ENCODE measurements at regions of chr10 and their contacts with region 1.

Region 1: DNA sequence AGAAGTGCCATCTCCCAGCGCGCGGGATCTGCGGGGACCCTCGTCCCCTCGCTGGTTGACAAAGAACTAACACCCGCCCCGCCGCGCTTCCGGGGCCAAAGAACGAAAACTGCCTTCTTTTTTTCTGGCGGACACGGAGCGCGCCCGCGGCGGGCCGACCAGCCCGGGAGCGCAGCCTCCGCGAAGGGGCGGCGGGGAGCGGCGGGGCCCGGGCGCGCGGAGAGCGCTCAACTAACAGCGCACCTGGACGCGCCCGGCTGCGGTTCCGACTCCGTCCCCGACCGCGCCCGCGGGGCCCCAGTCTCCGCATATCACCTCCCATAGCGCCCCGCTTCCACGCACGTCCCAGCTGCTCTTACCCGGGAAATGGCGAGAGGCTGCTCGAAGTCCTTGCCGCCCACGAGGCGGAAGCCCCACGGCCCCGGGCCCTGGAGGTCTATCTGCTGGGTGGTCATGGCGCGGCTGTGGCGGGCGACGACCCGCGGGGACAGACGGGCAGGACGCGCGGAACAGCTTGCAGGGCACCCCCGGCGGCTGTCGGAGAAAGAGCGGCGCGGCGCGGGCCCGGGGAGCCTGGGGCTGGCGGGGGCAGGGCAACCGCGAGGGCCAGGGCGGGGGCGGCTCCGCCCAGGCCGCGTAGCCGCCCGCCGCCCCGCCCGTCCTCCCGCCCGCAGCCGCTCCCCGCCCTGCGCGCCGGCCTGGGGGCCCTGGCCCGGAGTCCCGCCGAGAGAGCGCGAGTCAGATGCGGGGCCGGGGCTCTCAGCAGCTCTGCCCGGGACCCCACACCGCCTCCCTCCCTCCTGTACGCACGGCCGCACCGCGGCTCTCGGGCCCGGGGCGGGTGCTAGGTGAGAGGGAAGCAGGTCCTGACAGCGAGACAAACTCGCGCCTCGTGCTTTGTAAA is at the start of gene PDLIM1:
- DNase-seq: peak in 4 of 9 donors; percentile 16 to 57 (median 23)
- ATAC-seq: peak; percentile 82
- H3K4me3 ChIP-seq: peak within 1 kb of the TSS; percentile 43
- H3K4me3 Mint-ChIP-seq: peak within 1 kb of the TSS; percentile 71 to 88 (median 78)
- H3K27ac ChIP-seq: no peak within 1 kb of the TSS
- H3K27ac Mint-ChIP-seq: peak within 1 kb of the TSS in 2 of 9 donors; percentile 64 to 82
- H3K4me1 ChIP-seq: peaks cover 6 to 8% of the 10 kb centered on the region in 2 donors
- H3K4me1 Mint-ChIP-seq: peaks cover 11 to 51% (median 23%) of the 10 kb centered on the region in 7 donors
- H3K27me3 ChIP-seq: peaks cover 0 to 9% of the 10 kb centered on the region in 2 donors
- H3K27me3 Mint-ChIP-seq: peaks cover 39 to 59% (median 52%) of the 10 kb centered on the region in 5 donors
- total RNA-seq, gene PDLIM1: 0.32 to 27.6 (median 0.61) TPM

Region 2: GRCh38 chr10:95196053-95196452 is 94.7 kb before region 1 on chr10:
- CTCF ChIA-PET with region 1: no interaction called
- POLR2A ChIA-PET with region 1: no interaction called
- intact Hi-C with region 1: no loop called
- DNase-seq: no peak
- ATAC-seq: no peak
- H3K4me3 ChIP-seq: no peak overlapping the region
- H3K4me3 Mint-ChIP-seq: no peak overlapping the region
- H3K27ac ChIP-seq: no peak overlapping the region
- H3K27ac Mint-ChIP-seq: no peak overlapping the region
- H3K4me1 ChIP-seq: no peaks in the 10 kb centered on the region
- H3K4me1 Mint-ChIP-seq: no peaks in the 10 kb centered on the region
- H3K27me3 ChIP-seq: no peaks in the 10 kb centered on the region
- H3K27me3 Mint-ChIP-seq: peaks cover 0 to 12% (median 5%) of the 10 kb centered on the region in 5 donors

Region 3: GRCh38 chr10:95350219-95350829 is 59.6 kb after region 1 on chr10:
- CTCF ChIA-PET with region 1: no interaction called
- POLR2A ChIA-PET with region 1: no interaction called
- intact Hi-C with region 1: no loop called
- DNase-seq: no peak
- ATAC-seq: no peak
- H3K4me3 ChIP-seq: no peak overlapping the region
- H3K4me3 Mint-ChIP-seq: no peak overlapping the region
- H3K27ac ChIP-seq: no peak overlapping the region
- H3K27ac Mint-ChIP-seq: no peak overlapping the region
- H3K4me1 ChIP-seq: no peaks in the 10 kb centered on the region
- H3K4me1 Mint-ChIP-seq: no peaks in the 10 kb centered on the region
- H3K27me3 ChIP-seq: no peaks in the 10 kb centered on the region
- H3K27me3 Mint-ChIP-seq: peaks cover 0 to 16% (median 0%) of the 10 kb centered on the region in 5 donors

Region 4: GRCh38 chr10:95561182-95562075 is 270.7 kb after region 1 on chr10 and contains the start of gene SORBS1:
- CTCF ChIA-PET with region 1: no interaction called
- POLR2A ChIA-PET with region 1: no interaction called
- intact Hi-C with region 1: loop called in 1 of 2 experiments (anchors 5 kb)
- DNase-seq: peak; percentile 80 to 88 (median 82)
- ATAC-seq: peak; percentile 99
- H3K4me3 ChIP-seq: peak within 1 kb of the TSS; percentile 90
- H3K4me3 Mint-ChIP-seq: peak within 1 kb of the TSS; percentile 96 to 100 (median 99)
- H3K27ac ChIP-seq: peak within 1 kb of the TSS; percentile 66
- H3K27ac Mint-ChIP-seq: peak within 1 kb of the TSS; percentile 76 to 97 (median 89)
- H3K4me1 ChIP-seq: peaks cover 4% of the 10 kb centered on the region in 2 donors
- H3K4me1 Mint-ChIP-seq: peaks cover 7 to 16% (median 11%) of the 10 kb centered on the region in 7 donors
- H3K27me3 ChIP-seq: no peaks in the 10 kb centered on the region
- H3K27me3 Mint-ChIP-seq: peaks cover 0 to 63% (median 5%) of the 10 kb centered on the region in 5 donors
- total RNA-seq, gene SORBS1: 0.58 to 1.9 (median 1.4) TPM

Region 5: DNA sequence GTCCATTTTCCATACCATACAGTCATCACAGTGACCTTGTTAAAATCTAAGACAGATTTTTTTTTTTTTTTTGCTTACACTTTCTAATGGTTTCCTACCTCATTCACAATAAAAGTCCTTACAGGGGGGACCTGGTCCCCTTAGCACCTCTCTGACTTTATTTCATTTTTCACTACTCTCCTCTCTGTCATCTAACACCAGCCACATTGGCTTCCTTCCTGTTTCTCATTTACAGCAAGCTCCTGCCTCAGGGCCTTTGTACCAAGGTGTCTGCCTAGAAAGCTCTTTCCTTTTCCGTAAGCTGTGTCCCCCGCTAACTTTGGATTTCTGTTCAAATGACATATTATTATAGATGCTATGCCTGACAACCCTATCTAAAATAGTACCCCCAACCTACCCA is 644.7 kb after region 1 on chr10:
- CTCF ChIA-PET with region 1: no interaction called
- POLR2A ChIA-PET with region 1: no interaction called
- intact Hi-C with region 1: no loop called
- DNase-seq: no peak
- ATAC-seq: no peak
- H3K4me3 ChIP-seq: no peak overlapping the region
- H3K4me3 Mint-ChIP-seq: peak overlapping the region in 2 of 10 donors; percentile 38
- H3K27ac ChIP-seq: no peak overlapping the region
- H3K27ac Mint-ChIP-seq: peak overlapping the region in 1 of 9 donors; percentile 53
- H3K4me1 ChIP-seq: no peaks in the 10 kb centered on the region
- H3K4me1 Mint-ChIP-seq: peaks cover 0 to 7% (median 5%) of the 10 kb centered on the region in 7 donors
- H3K27me3 ChIP-seq: no peaks in the 10 kb centered on the region
- H3K27me3 Mint-ChIP-seq: peaks cover 14 to 38% (median 24%) of the 10 kb centered on the region in 5 donors